Mammary epithelial cell (primary cell): ENCODE measurements at regions of chr22 and their contacts with region 1.

Region 1: DNA sequence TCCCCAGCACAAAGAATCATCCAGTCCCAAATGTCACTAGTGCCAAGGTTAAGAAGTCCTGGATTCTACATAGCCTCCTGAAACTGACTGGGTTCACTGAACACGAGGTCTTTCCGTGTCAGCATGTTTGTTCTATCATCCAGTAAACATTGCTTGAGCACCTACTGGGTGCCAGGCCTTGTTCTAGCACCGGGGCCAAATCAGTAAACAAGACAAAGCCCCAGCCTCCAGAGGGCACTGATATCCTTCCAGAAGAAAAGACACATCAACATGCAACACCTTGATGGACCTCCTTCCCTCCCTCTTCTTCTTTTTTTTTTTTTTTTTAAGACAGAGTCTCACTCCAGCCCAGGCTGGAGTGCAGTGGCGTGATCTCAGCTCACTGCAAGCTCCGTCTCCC is 26.9 kb downstream of the TPST2 start:
- DNase-seq: no peak
- H3K4me3 ChIP-seq: no peak overlapping the region
- H3K27ac ChIP-seq: no peak overlapping the region
- H3K4me1 ChIP-seq: peaks cover 36% of the 10 kb centered on the region
- H3K27me3 ChIP-seq: no peaks in the 10 kb centered on the region
- CTCF ChIP-seq: peak in 1 of 2 donors; percentile 33

Region 2: GRCh38 chr22:26550498-26551033 is 12.5 kb before region 1 on chr22:
- CTCF ChIA-PET with region 1: no interaction called
- dilution Hi-C with region 1: no loop called
- in situ Hi-C with region 1: no loop called
- intact Hi-C with region 1: loop called (anchors 1 kb)
- DNase-seq: no peak
- H3K4me3 ChIP-seq: no peak overlapping the region
- H3K27ac ChIP-seq: no peak overlapping the region
- H3K4me1 ChIP-seq: peaks cover 60% of the 10 kb centered on the region
- H3K27me3 ChIP-seq: no peaks in the 10 kb centered on the region
- CTCF ChIP-seq: no peak

Region 3: DNA sequence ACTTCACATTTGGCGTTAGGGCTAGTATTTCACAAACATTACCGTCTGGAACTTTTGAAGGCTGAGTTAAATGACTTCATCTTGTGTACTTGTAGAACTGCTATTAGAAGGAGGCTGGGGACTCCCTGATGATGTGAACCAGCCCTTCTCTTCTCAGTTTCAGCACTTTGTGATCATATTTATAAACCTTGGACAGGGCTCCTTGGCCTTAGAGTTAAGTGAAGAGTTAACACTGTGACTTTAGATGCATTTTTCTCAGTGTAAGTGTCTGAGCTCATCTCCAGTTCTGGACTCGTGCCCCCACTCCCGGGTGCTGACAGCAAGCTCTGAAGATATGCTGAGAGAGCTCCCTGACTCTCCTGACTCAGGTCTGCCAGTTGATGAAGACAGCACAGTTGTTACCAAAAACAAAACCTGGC is 102.8 kb after region 1 on chr22:
- CTCF ChIA-PET with region 1: interaction called, 4 read pairs
- dilution Hi-C with region 1: no loop called
- in situ Hi-C with region 1: no loop called
- intact Hi-C with region 1: loop called (anchors 2 kb)
- DNase-seq: no peak
- H3K4me3 ChIP-seq: no peak overlapping the region
- H3K27ac ChIP-seq: no peak overlapping the region
- H3K4me1 ChIP-seq: peaks cover 8% of the 10 kb centered on the region
- H3K27me3 ChIP-seq: no peaks in the 10 kb centered on the region
- CTCF ChIP-seq: no peak

Region 4: DNA sequence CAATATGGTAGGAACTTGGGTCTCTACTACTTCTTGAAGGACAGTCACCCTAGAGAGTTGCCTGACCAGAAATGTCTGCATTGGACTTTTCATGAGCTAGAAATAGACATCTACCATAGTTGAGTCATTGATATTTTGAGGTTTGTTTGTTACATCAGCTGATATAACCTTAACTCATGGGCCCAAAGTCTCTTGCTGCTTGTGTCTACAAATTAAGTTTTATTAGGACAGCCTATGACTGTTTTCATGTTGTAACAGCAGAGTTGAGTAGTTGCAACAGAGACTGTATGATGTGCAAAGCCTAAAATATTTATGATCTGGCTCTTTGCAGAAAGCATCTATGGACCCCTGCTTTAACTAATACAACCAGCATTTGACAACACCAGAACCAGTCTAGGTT is 249.7 kb after region 1 on chr22:
- CTCF ChIA-PET with region 1: no interaction called
- dilution Hi-C with region 1: no loop called
- in situ Hi-C with region 1: no loop called
- intact Hi-C with region 1: no loop called
- DNase-seq: peak; percentile 2
- H3K4me3 ChIP-seq: no peak overlapping the region
- H3K27ac ChIP-seq: no peak overlapping the region
- H3K4me1 ChIP-seq: no peaks in the 10 kb centered on the region
- H3K27me3 ChIP-seq: no peaks in the 10 kb centered on the region
- CTCF ChIP-seq: no peak